ENCODE measurements at regions of chr7 and their contacts with region 1.

Region 1: GRCh38 chr7:39732837-39733804 is 109.7 kb downstream of the RALA start:
- DNase-seq: peak; percentile 94
- H3K4me3 Mint-ChIP-seq: peak overlapping the region; percentile 83
- H3K27ac Mint-ChIP-seq: peak overlapping the region; percentile 98
- H3K4me1 Mint-ChIP-seq: peaks cover 35% of the 10 kb centered on the region
- H3K27me3 Mint-ChIP-seq: no peaks in the 10 kb centered on the region

Region 2: GRCh38 chr7:39720574-39720973 is 12.5 kb before region 1 on chr7:
- CTCF ChIA-PET with region 1: interaction called, 10 read pairs
- POLR2A ChIA-PET with region 1: no interaction called
- DNase-seq: no peak
- H3K4me3 Mint-ChIP-seq: no peak overlapping the region
- H3K27ac Mint-ChIP-seq: no peak overlapping the region
- H3K4me1 Mint-ChIP-seq: peaks cover 2% of the 10 kb centered on the region
- H3K27me3 Mint-ChIP-seq: peaks cover 4% of the 10 kb centered on the region